ENCODE measurements at regions of chr14 and their contacts with region 1.

Region 1: DNA sequence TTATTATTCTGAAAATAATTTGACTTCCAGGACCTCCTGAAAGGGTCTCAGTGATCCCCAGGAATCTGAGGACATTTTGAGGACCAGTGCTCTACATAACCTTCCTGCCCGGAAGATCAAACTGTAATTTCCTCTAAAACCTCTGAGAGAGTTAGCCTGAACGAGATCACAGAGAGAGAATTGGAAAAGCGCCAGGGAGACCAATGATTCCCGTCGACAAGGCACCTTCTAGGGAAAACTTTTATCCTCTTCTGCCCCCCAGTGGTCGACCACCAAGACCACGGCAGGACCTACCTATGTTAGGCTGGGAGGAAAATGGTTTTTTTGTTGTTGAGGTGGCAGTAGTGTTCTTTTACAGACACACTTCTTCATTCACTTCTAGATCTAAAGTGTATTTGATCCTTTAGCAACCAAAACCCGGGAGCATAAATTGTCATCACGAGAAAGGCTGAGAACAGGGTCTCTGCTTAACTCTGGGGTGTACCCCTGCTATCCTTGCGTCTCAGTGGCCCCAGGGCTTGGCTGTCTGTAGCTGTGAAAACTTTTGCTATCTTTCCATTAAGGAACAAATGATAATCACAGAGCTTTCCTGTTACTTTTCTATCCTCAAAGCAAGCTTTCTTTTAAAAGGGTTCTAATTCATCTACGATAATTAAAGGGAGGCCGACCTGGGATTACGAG is 62.9 kb upstream of the NID2 start:
- DNase-seq: peak; percentile 57
- H3K4me3 ChIP-seq: no peak overlapping the region
- H3K27ac ChIP-seq: no peak overlapping the region
- H3K4me1 ChIP-seq: no peaks in the 10 kb centered on the region
- CTCF ChIP-seq: peak; percentile 81

Region 2: DNA sequence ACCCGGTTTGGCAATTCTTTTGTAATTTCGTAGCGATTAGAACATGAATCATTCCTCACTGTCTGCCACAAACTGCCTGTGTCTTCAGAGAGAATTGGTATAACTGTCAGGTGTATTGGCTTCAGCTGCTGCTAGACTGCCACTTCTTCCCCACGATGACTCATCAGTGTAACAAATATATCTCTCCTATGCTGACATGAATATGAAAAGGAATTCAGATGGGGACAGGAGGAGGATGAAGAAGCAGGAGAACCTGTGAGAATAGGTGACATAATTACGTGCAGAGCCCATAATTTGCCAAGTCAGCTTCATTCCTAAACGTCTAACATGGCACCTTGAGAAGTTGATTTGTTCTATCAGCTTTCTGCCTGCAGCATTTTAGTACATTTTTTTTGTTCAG is 415.2 kb before region 1 on chr14:
- CTCF ChIA-PET with region 1: no interaction called
- POLR2A ChIA-PET with region 1: no interaction called
- intact Hi-C with region 1: no loop called
- DNase-seq: no peak
- H3K4me3 ChIP-seq: no peak overlapping the region
- H3K27ac ChIP-seq: no peak overlapping the region
- H3K4me1 ChIP-seq: no peaks in the 10 kb centered on the region
- CTCF ChIP-seq: no peak

Region 3: GRCh38 chr14:51780006-51780692 is 351.6 kb before region 1 on chr14:
- CTCF ChIA-PET with region 1: no interaction called
- POLR2A ChIA-PET with region 1: no interaction called
- intact Hi-C with region 1: loop called (anchors 5 kb)
- DNase-seq: peak; percentile 77
- H3K4me3 ChIP-seq: no peak overlapping the region
- H3K27ac ChIP-seq: no peak overlapping the region
- H3K4me1 ChIP-seq: no peaks in the 10 kb centered on the region
- CTCF ChIP-seq: peak; percentile 96

Region 4: GRCh38 chr14:51860164-51860824 is 271.5 kb before region 1 on chr14 and contains the start of gene GNG2:
- CTCF ChIA-PET with region 1: no interaction called
- POLR2A ChIA-PET with region 1: no interaction called
- intact Hi-C with region 1: loop called (anchors 5 kb)
- DNase-seq: peak; percentile 89
- H3K4me3 ChIP-seq: peak within 1 kb of the TSS; percentile 70
- H3K27ac ChIP-seq: peak within 1 kb of the TSS; percentile 59
- H3K4me1 ChIP-seq: peaks cover 28% of the 10 kb centered on the region
- CTCF ChIP-seq: no peak
- total RNA-seq, gene GNG2: 22.3 and 24.0 TPM in 2 replicates

Region 5: GRCh38 chr14:51989293-51990234 is 142.2 kb before region 1 on chr14 and contains the start of gene RTRAF:
- CTCF ChIA-PET with region 1: no interaction called
- POLR2A ChIA-PET with region 1: no interaction called
- intact Hi-C with region 1: loop called (anchors 10 kb)
- DNase-seq: peak; percentile 93
- H3K4me3 ChIP-seq: peak within 1 kb of the TSS; percentile 97
- H3K27ac ChIP-seq: peak within 1 kb of the TSS; percentile 44
- H3K4me1 ChIP-seq: peaks cover 30% of the 10 kb centered on the region
- CTCF ChIP-seq: no peak
- total RNA-seq, gene RTRAF: 194 and 244 TPM in 2 replicates

Region 6: GRCh38 chr14:52043690-52044089 is 88.1 kb before region 1 on chr14:
- CTCF ChIA-PET with region 1: no interaction called
- POLR2A ChIA-PET with region 1: no interaction called
- intact Hi-C with region 1: loop called (anchors 10 kb)
- DNase-seq: peak; percentile 23
- H3K4me3 ChIP-seq: no peak overlapping the region
- H3K27ac ChIP-seq: no peak overlapping the region
- H3K4me1 ChIP-seq: no peaks in the 10 kb centered on the region
- CTCF ChIP-seq: peak; percentile 69

Region 7: DNA sequence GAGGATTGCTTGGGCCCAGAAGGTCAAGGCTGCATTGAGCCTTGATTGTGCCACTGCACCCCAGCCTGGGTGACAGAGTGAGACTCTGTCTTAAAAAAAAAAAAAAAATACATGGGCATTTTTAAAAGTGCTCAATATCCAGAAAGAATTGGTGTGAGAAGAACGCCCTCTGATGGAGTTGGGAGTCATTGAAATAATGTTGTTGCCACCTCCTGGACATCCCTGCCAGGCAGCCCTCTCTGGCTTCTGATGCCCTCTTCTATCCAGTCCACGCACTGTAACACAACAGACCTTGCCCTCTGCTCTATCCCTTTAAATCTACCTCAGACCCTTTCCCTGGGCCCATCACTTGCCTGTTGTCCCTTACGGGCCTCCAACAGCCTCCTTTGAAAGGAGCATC is 140.6 kb after region 1 on chr14:
- CTCF ChIA-PET with region 1: no interaction called
- POLR2A ChIA-PET with region 1: interaction called, 3 read pairs
- intact Hi-C with region 1: loop called (anchors 1 kb)
- DNase-seq: peak; percentile 45
- H3K4me3 ChIP-seq: no peak overlapping the region
- H3K27ac ChIP-seq: no peak overlapping the region
- H3K4me1 ChIP-seq: no peaks in the 10 kb centered on the region
- CTCF ChIP-seq: peak; percentile 65

Measured in OCI-LY7 (cell line).